Caco-2 (cell line): ENCODE measurements at regions of chr5 and their contacts with region 1.

Region 1: GRCh38 chr5:35182541-35183535 is 47.4 kb downstream of the PRLR start:
- DNase-seq: peak; percentile 62 to 67
- H3K4me3 ChIP-seq: no peak overlapping the region
- H3K4me3 Mint-ChIP-seq: no peak overlapping the region
- H3K27ac Mint-ChIP-seq: no peak overlapping the region
- H3K4me1 ChIP-seq: peaks cover 6% of the 10 kb centered on the region; the same call in 1 of the 2 replicates
- H3K4me1 Mint-ChIP-seq: peaks cover 6% of the 10 kb centered on the region
- H3K27me3 ChIP-seq: no peaks in the 10 kb centered on the region
- H3K27me3 Mint-ChIP-seq: no peaks in the 10 kb centered on the region
- CTCF ChIP-seq: peak; percentile 40 to 71

Region 2: GRCh38 chr5:35030426-35031100 is 152.3 kb before region 1 on chr5:
- CTCF ChIA-PET with region 1: no interaction called
- POLR2A ChIA-PET with region 1: no interaction called
- intact Hi-C with region 1: loop called (anchors 5 kb)
- DNase-seq: no peak
- H3K4me3 ChIP-seq: no peak overlapping the region
- H3K4me3 Mint-ChIP-seq: no peak overlapping the region
- H3K27ac Mint-ChIP-seq: no peak overlapping the region
- H3K4me1 ChIP-seq: no peaks in the 10 kb centered on the region; the same call in 1 of the 2 replicates
- H3K4me1 Mint-ChIP-seq: no peaks in the 10 kb centered on the region
- H3K27me3 ChIP-seq: no peaks in the 10 kb centered on the region; the same call in 1 of the 2 replicates
- H3K27me3 Mint-ChIP-seq: peaks cover 11% of the 10 kb centered on the region
- CTCF ChIP-seq: peak in 1 of 2 experiments; percentile 20

Region 3: DNA sequence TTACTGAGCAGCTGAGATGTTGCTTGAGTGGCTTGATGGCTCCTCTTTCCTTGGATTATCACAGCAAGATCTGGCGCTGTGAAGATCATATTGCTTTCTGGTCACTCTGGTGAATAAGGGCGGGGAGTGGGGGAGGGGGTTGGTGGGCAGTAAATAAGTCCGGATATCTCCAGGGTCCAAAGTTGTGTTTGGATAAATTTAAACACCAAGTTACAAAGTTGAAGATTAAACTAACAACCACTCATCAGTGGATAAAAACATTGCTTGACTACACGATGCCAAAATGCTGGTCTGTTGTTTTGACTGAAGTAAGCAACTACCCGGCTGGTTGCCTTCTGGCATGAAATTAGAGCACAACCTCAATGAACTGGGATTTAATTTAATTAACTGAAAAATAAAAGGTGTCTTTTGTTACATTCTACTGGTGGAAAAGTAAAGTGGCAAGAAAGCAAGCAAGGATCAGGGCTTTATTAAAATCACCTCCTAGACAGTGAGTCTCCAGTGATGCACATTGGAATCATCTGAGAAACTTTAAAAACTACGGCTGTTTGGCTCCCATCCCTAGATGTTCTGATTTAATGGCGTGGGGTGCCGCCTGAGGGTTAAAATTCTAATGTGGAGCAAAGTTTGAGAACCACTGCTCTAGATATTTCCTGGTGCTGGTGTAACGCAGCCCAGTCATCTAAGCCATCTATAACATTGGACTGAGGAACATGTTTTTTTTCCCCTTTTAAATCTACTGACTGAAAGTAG is 48.4 kb before region 1 on chr5:
- CTCF ChIA-PET with region 1: no interaction called
- POLR2A ChIA-PET with region 1: no interaction called
- intact Hi-C with region 1: loop called (anchors 2 kb)
- DNase-seq: no peak
- H3K4me3 ChIP-seq: no peak overlapping the region
- H3K4me3 Mint-ChIP-seq: no peak overlapping the region
- H3K27ac Mint-ChIP-seq: no peak overlapping the region
- H3K4me1 ChIP-seq: peaks cover 6% of the 10 kb centered on the region; the same call in 1 of the 2 replicates
- H3K4me1 Mint-ChIP-seq: no peaks in the 10 kb centered on the region
- H3K27me3 ChIP-seq: no peaks in the 10 kb centered on the region
- H3K27me3 Mint-ChIP-seq: no peaks in the 10 kb centered on the region
- CTCF ChIP-seq: no peak

Region 4: DNA sequence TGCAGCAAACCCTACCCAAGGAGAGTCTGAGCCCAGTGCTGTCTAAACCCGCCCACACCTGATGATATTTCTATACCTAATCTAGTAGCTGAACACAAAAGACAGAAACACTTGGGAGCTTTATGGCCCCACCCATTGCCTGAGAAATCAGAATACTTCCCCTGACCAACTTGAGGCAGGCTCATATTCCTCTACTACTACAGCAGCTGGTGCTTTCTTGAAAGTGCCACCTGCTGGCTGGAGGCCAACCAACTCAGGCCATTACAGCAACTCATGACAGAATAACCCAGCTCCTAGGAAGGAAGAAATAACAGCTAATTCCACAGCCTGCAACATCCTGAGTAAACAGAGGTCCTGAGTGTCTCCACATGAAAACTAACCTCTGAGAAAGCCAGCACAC is 261.4 kb after region 1 on chr5:
- CTCF ChIA-PET with region 1: no interaction called
- POLR2A ChIA-PET with region 1: no interaction called
- intact Hi-C with region 1: no loop called
- DNase-seq: peak in 1 of 2 experiments; percentile 8
- H3K4me3 ChIP-seq: no peak overlapping the region
- H3K4me3 Mint-ChIP-seq: no peak overlapping the region
- H3K27ac Mint-ChIP-seq: no peak overlapping the region
- H3K4me1 ChIP-seq: no peaks in the 10 kb centered on the region
- H3K4me1 Mint-ChIP-seq: no peaks in the 10 kb centered on the region
- H3K27me3 ChIP-seq: no peaks in the 10 kb centered on the region
- H3K27me3 Mint-ChIP-seq: no peaks in the 10 kb centered on the region
- CTCF ChIP-seq: no peak